ENCODE measurements at regions of chr11 and their contacts with region 1.

Region 1: GRCh38 chr11:121494355-121495099 is 41.8 kb upstream of the SORL1-AS1 start:
- DNase-seq: no peak
- H3K4me3 Mint-ChIP-seq: peak overlapping the region; percentile 62
- H3K27ac Mint-ChIP-seq: peak overlapping the region; percentile 69
- H3K4me1 Mint-ChIP-seq: peaks cover 32% of the 10 kb centered on the region
- H3K27me3 Mint-ChIP-seq: no peaks in the 10 kb centered on the region

Region 2: DNA sequence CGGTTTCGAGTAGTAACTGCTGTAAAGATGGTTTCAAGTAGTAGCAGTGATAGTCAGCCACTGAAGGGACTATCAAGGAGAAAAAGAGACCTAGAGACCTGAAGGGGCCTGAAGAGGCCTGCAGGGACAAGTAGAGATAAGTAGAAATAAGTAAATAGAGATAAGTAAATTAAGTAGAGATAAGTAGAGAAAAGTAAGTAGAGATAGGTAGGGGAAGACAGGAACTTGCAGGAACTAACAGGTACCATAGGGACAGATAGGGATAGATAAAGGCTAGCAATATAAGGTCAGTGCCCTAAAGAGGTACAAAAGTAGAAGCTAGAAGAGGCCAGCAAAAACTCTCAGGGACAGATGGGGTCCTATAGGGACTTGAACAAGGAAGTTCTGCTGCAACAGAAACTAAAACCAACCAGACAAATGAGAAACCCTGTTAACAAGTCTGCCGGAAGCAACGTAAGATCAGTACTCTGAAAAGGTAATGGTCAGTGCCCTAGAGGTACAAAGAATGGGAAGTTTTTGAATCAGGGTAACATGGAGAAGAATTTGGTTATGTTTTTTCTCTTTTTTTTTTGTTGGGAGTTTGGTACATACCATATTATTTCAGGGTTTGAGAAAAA is 211.5 kb before region 1 on chr11:
- intact Hi-C with region 1: no loop called
- DNase-seq: no peak
- H3K4me3 Mint-ChIP-seq: no peak overlapping the region
- H3K27ac Mint-ChIP-seq: no peak overlapping the region
- H3K4me1 Mint-ChIP-seq: no peaks in the 10 kb centered on the region
- H3K27me3 Mint-ChIP-seq: peaks cover 59% of the 10 kb centered on the region

Region 3: GRCh38 chr11:121389651-121390050 is 104.9 kb before region 1 on chr11:
- intact Hi-C with region 1: no loop called
- DNase-seq: no peak
- H3K4me3 Mint-ChIP-seq: no peak overlapping the region
- H3K27ac Mint-ChIP-seq: no peak overlapping the region
- H3K4me1 Mint-ChIP-seq: peaks cover 12% of the 10 kb centered on the region
- H3K27me3 Mint-ChIP-seq: no peaks in the 10 kb centered on the region

Region 4: GRCh38 chr11:121534131-121535093 is 39.9 kb after region 1 on chr11:
- intact Hi-C with region 1: loop called (anchors 5 kb)
- DNase-seq: peak; percentile 40
- H3K4me3 Mint-ChIP-seq: no peak overlapping the region
- H3K27ac Mint-ChIP-seq: no peak overlapping the region
- H3K4me1 Mint-ChIP-seq: peaks cover 32% of the 10 kb centered on the region
- H3K27me3 Mint-ChIP-seq: no peaks in the 10 kb centered on the region